Activated B cell treated with CpG ODN at 0.5 μM for 24 hours (primary cell): ENCODE measurements at regions of chr3 and their contacts with region 1.

Region 1: DNA sequence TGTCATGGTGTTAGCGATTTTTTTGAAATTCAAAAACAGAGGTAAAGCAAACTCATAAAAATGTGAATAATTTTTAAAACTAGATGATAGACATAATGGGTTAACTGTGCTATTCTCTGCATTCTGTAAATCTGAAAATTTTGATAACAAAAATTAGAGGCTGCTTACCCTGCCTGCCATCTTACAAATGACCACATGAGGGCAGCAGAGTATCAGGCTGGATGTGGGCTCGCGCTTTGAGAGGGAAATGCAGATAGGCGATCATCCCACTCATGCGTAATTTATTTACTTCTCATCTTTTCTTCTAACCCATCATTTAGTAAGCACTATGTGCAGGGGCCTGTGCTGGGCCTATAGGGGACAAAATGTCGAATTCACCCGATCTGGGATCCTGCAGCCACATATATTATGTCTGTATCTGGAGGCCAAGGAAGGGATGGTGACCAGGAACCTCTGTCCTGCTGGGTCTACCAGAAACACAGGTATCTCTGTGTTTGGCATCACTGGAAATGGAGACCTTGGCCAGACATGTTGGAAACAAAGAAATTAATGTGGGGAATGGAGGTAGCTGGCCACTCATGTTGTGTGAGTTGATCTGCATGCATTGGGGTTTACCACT is 7.8 kb upstream of the RAD18 start:
- DNase-seq: peak; percentile 47
- ATAC-seq: peak; percentile 91
- H3K4me3 Mint-ChIP-seq: no peak overlapping the region
- H3K27ac Mint-ChIP-seq: no peak overlapping the region
- H3K4me1 Mint-ChIP-seq: peaks cover 4% of the 10 kb centered on the region
- H3K27me3 Mint-ChIP-seq: peaks cover 15% of the 10 kb centered on the region
- CTCF ChIP-seq: peak; percentile 94

Region 2: GRCh38 chr3:8746780-8747345 is 224.2 kb before region 1 on chr3:
- CTCF ChIA-PET with region 1: no interaction called
- POLR2A ChIA-PET with region 1: no interaction called
- intact Hi-C with region 1: no loop called
- DNase-seq: no peak
- ATAC-seq: no peak
- H3K4me3 Mint-ChIP-seq: no peak overlapping the region
- H3K27ac Mint-ChIP-seq: no peak overlapping the region
- H3K4me1 Mint-ChIP-seq: no peaks in the 10 kb centered on the region
- H3K27me3 Mint-ChIP-seq: no peaks in the 10 kb centered on the region
- CTCF ChIP-seq: no peak

Region 3: DNA sequence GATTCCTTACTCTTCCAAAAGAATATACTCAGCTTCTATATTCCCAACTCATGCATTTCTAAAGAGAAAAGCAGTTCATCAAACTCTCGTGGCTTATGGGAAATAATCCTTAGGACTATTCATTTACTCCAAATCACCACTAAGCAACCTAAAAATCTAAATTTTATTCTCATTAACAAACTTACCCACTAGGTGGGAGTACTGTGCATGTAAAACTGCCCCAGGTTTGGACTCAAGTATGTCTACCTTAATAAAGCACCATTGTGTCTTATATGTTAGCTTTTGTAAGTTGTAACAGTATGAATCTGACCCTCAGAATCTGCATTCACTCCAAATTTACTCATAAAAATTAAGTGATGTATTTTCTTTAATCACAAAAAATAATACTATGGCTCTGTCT is 33.1 kb before region 1 on chr3:
- CTCF ChIA-PET with region 1: no interaction called
- POLR2A ChIA-PET with region 1: no interaction called
- intact Hi-C with region 1: loop called (anchors 1 kb)
- DNase-seq: no peak
- ATAC-seq: no peak
- H3K4me3 Mint-ChIP-seq: no peak overlapping the region
- H3K27ac Mint-ChIP-seq: no peak overlapping the region
- H3K4me1 Mint-ChIP-seq: no peaks in the 10 kb centered on the region
- H3K27me3 Mint-ChIP-seq: no peaks in the 10 kb centered on the region
- CTCF ChIP-seq: no peak